Heart right ventricle (tissue), 16 donors: ENCODE measurements at regions of chr7 and their contacts with region 1.

Region 1: DNA sequence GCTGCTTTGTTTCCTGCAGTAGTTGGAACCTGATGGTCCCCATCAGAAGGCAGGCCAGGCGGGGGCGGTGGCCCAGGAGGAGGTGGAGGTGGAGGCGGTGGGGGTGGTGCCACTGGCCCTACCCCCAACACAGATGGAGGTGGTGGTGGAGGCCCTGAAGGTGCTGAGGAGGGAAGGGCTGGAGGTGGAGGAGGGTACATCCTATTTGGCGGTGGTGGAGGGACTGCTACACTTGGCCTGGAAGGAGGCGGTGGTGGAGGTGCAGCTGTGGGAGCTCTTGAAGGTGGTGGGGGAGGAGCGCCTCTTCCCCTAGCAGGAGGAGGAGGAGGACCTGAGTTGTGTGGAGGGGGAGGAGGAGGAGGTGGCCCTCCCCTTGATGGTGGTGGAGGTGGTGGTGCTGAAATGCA is 36.8 kb downstream of the LMOD2 start:
- DNase-seq: no peak
- ATAC-seq: peak in 4 of 8 donors; percentile 9 to 41 (median 30)
- H3K4me3 ChIP-seq: no peak overlapping the region
- H3K27ac ChIP-seq: no peak overlapping the region
- H3K4me1 ChIP-seq: no peaks in the 10 kb centered on the region
- H3K27me3 ChIP-seq: no peaks in the 10 kb centered on the region
- CTCF ChIP-seq: no peak

Region 2: DNA sequence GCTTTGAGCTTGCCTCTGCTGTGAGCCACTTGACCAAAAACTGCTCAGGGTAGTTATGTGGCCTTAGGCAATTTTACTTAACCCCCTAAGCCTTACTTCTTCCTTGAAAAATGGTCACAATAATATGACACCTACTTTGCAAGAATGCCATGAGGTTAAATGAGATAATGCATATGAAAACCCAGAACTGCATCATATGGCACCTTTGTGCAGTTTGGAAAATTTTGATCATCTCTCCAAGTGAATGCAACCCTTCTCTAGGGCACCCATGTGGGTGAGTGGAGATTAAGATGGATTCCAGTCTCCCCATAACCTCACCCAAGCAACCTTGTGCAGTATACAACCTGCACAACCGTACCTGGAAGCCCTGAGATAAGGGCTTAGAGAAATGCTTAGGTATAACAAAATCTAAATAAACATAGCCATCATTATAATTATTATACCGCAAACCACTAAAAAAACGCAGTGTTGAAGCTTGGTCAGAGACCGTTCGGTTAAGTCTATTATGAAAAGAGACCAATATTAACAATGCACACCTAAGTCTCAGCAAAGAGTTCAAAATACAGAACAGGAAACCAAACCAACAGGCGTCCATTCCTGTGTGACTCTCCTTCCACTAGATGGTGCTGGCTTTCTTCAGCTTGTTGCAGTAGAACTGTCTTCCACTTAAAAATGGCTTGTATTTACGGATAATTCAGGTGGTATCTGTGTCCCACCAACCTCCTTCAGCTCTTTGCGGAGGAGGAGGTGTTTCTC is 111.9 kb before region 1 on chr7:
- intact Hi-C with region 1: loop called in 1 of 10 experiments (anchors 10 kb)
- DNase-seq: peak in 1 of 2 donors; percentile 26
- ATAC-seq: peak; percentile 43 to 82 (median 76)
- H3K4me3 ChIP-seq: no peak overlapping the region
- H3K27ac ChIP-seq: peak overlapping the region in 1 of 10 donors; percentile 12
- H3K4me1 ChIP-seq: peaks cover 0 to 5% (median 0%) of the 10 kb centered on the region in 9 donors
- H3K27me3 ChIP-seq: no peaks in the 10 kb centered on the region
- CTCF ChIP-seq: peak; percentile 34 to 77 (median 64)

Region 3: GRCh38 chr7:123635551-123636359 is 56.7 kb before region 1 on chr7:
- intact Hi-C with region 1: loop called in 2 of 10 experiments (anchors 5 kb)
- DNase-seq: no peak
- ATAC-seq: peak in 7 of 8 donors; percentile 63 to 78 (median 73)
- H3K4me3 ChIP-seq: no peak overlapping the region
- H3K27ac ChIP-seq: peak overlapping the region in 2 of 10 donors; percentile 27 to 70
- H3K4me1 ChIP-seq: peaks cover 3 to 30% (median 9%) of the 10 kb centered on the region in 9 donors
- H3K27me3 ChIP-seq: no peaks in the 10 kb centered on the region
- CTCF ChIP-seq: peak in 8 of 9 donors; percentile 39 to 78 (median 63)

Region 4: GRCh38 chr7:123748734-123749536 is 56.5 kb after region 1 on chr7 and contains the start of gene WASL:
- intact Hi-C with region 1: loop called in 3 of 10 experiments (anchors 10 kb)
- DNase-seq: peak; percentile 91 to 95
- ATAC-seq: peak; percentile 94 to 98 (median 96)
- H3K4me3 ChIP-seq: peak within 1 kb of the TSS; percentile 80 to 95 (median 89)
- H3K27ac ChIP-seq: peak within 1 kb of the TSS; percentile 94 to 99 (median 98)
- H3K4me1 ChIP-seq: peaks cover 0 to 73% (median 59%) of the 10 kb centered on the region in 9 donors
- H3K27me3 ChIP-seq: no peaks in the 10 kb centered on the region
- CTCF ChIP-seq: peak in 5 of 9 donors; percentile 5 to 33 (median 19)
- total RNA-seq, gene WASL: 21.6 to 30.0 (median 25.2) TPM